Endothelial cell of umbilical vein (primary cell): ENCODE measurements at regions of chr12 and their contacts with region 1.

Region 1: DNA sequence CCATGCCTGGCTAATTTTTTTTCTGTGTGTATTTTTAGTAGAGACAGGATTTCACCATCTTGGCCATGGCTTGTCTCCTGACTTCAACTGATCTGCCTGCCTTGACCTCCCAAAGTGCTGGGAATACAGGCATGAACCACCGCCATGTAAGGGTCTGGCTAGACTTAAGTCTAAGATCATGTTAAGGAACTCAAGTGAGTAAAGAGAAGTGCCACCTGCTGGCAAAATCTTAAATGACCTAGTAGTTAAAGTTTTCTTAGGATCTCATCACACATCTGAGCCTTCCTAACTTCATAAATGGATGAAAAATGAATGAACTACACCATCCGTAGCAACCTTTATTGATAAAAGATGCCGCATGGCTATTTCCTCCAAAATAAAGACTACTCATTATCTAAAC is 1.7 kb upstream of the C12orf56 start:
- DNase-seq: peak; percentile 59
- H3K4me3 ChIP-seq: no peak overlapping the region
- H3K27ac ChIP-seq: no peak overlapping the region
- H3K4me1 ChIP-seq: peaks cover 19% of the 10 kb centered on the region
- H3K27me3 ChIP-seq: peaks cover 3 to 5% of the 10 kb centered on the region in 2 experiments
- CTCF ChIP-seq: peak; percentile 25 to 27
- POLR2A ChIP-seq: no peak

Region 2: DNA sequence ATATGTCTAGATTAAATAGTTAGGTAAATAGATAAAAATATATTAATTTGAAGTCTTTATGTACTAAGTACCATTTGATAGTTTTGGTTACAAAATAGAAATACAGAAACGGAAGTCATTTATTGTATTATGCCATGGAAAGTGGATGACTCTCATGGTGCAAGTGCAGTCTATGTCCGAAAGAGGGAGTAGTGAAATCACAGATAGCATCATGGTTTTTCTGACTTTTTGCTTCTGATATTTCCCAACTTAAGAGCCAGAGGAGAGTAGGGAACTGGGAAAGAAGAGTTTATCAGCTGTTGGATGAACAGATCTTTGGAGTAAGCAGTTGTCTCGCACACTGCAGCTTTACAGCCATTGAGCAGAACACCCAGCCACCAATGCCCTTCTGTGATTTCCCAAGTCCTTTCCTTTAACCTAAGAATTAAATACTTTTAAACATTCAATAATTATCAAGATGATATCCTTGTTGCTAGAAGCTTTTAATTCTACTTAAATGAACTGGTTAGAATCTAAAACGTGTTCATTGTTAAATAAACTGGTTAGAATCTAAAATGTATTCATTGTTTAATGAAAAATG is 566.1 kb before region 1 on chr12:
- CTCF ChIA-PET with region 1: interaction called, 5 read pairs
- POLR2A ChIA-PET with region 1: interaction called, 3 read pairs
- dilution Hi-C with region 1: no loop called
- intact Hi-C with region 1: loop called (anchors 1 kb)
- DNase-seq: peak; percentile 66
- H3K4me3 ChIP-seq: no peak overlapping the region
- H3K27ac ChIP-seq: no peak overlapping the region
- H3K4me1 ChIP-seq: peaks cover 2% of the 10 kb centered on the region
- H3K27me3 ChIP-seq: peaks cover 1 to 4% of the 10 kb centered on the region in 2 experiments
- CTCF ChIP-seq: peak; percentile 61 to 72
- POLR2A ChIP-seq: no peak

Region 3: GRCh38 chr12:64256166-64256800 is 135.9 kb before region 1 on chr12:
- CTCF ChIA-PET with region 1: no interaction called
- POLR2A ChIA-PET with region 1: no interaction called
- dilution Hi-C with region 1: no loop called
- intact Hi-C with region 1: loop called (anchors 5 kb)
- DNase-seq: peak; percentile 61
- H3K4me3 ChIP-seq: no peak overlapping the region
- H3K27ac ChIP-seq: no peak overlapping the region
- H3K4me1 ChIP-seq: no peaks in the 10 kb centered on the region
- H3K27me3 ChIP-seq: no peaks in the 10 kb centered on the region
- CTCF ChIP-seq: peak; percentile 25 to 27
- POLR2A ChIP-seq: no peak

Region 4: DNA sequence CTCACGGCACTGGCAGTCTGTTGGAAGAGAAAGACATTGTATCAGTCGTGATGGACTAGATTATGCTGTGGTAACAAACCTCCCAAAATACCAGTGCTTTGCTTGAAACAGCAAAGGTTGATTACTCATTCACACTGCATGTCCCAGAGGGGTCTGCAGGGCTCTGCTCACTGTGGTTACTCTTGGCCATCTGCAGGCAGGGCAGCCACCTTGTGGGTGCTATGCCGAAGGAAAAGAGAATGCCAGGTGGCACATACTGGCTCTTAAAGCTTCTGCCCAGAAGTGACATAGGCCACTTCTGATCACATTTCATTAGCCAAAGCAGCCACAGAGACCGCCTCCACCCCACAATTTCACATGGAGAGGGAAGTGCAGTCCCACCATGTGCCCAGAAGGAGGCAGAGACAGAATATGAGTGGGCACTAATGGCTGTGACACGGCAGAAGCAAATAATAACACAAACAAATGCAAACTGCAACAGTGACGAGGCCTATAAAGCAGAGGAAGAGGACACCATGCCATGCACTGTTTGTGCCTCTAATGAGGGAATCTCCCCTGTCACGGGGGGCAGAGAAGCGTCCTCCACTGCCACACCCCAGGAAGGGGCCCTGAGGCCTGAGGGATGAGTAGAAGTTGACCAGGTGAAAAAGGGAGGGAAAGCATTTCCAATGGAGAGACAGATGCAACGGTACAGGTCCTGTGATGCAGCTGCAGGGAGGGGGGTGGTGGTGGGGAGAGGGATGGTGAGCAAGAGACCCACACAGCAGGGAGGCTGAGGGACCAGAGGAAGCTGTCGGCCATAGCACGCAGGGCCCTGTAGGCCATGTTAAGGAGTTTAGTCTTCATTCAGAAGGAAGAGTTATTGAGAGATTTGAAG is 118.5 kb before region 1 on chr12:
- CTCF ChIA-PET with region 1: interaction called, 5 read pairs
- POLR2A ChIA-PET with region 1: no interaction called
- dilution Hi-C with region 1: no loop called
- intact Hi-C with region 1: loop called (anchors 1 kb)
- DNase-seq: peak; percentile 9
- H3K4me3 ChIP-seq: no peak overlapping the region
- H3K27ac ChIP-seq: no peak overlapping the region
- H3K4me1 ChIP-seq: no peaks in the 10 kb centered on the region
- H3K27me3 ChIP-seq: peaks cover 0 to 3% of the 10 kb centered on the region in 2 experiments
- CTCF ChIP-seq: peak; percentile 26 to 36
- POLR2A ChIP-seq: no peak

Region 5: GRCh38 chr12:64403707-64404469 is 11.7 kb after region 1 on chr12 and contains the start of gene XPOT:
- CTCF ChIA-PET with region 1: interaction called, 7 read pairs
- POLR2A ChIA-PET with region 1: interaction called, 3 read pairs
- dilution Hi-C with region 1: no loop called
- intact Hi-C with region 1: loop called (anchors 1 kb)
- DNase-seq: peak; percentile 97
- H3K4me3 ChIP-seq: peak within 1 kb of the TSS; percentile 55 to 100 (median 78)
- H3K27ac ChIP-seq: peak within 1 kb of the TSS; percentile 89
- H3K4me1 ChIP-seq: peaks cover 10% of the 10 kb centered on the region
- H3K27me3 ChIP-seq: no peaks in the 10 kb centered on the region
- CTCF ChIP-seq: peak in 1 of 2 donors; percentile 16
- POLR2A ChIP-seq: peak; percentile 97
- total RNA-seq, gene XPOT: 88.9 and 93.0 TPM in 2 replicates